ENCODE measurements at regions of chr9 and their contacts with region 1.

Region 1: GRCh38 chr9:75628952-75629351 is 261.5 kb upstream of the PCSK5 start:
- DNase-seq: no peak
- ATAC-seq: no peak
- H3K4me3 ChIP-seq: no peak overlapping the region
- H3K4me3 Mint-ChIP-seq: no peak overlapping the region
- H3K27ac ChIP-seq: no peak overlapping the region
- H3K27ac Mint-ChIP-seq: no peak overlapping the region
- H3K4me1 ChIP-seq: no peaks in the 10 kb centered on the region
- H3K4me1 Mint-ChIP-seq: no peaks in the 10 kb centered on the region
- H3K27me3 ChIP-seq: no peaks in the 10 kb centered on the region
- H3K27me3 Mint-ChIP-seq: peaks cover 16% of the 10 kb centered on the region
- CTCF ChIP-seq: no peak

Region 2: DNA sequence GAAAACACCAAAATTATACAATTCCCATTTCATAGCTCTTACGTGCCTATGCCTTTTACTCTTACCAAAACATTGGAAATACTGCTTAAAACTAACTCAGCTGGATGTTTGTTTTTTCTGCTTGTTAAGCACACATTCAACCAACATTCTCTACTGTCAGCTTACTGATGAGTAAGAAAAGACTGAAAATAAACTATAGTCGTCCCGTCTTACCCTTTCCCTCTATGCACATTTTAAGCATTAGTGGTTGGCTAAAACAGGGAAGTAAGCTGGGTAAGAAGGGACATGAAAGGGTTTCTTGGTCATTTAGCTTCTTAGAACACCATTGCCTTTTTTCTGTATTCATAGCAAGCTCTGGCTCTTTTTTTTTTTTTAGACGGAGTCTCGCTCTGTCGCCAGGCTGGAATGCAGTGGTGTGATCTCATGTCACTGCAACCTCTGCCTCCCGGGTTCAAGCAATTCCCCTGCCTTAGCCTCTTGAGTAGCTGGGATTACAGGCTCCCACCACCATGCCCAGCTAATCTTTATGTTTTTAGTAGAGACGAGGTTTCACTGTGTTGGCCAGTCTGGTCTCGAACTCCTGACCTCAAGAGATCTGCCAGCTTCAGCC is 29.5 kb after region 1 on chr9:
- CTCF ChIA-PET with region 1: no interaction called
- POLR2A ChIA-PET with region 1: no interaction called
- intact Hi-C with region 1: loop called in 1 of 2 experiments (anchors 1 kb)
- DNase-seq: no peak
- ATAC-seq: no peak
- H3K4me3 ChIP-seq: no peak overlapping the region
- H3K4me3 Mint-ChIP-seq: no peak overlapping the region
- H3K27ac ChIP-seq: no peak overlapping the region
- H3K27ac Mint-ChIP-seq: no peak overlapping the region
- H3K4me1 ChIP-seq: no peaks in the 10 kb centered on the region
- H3K4me1 Mint-ChIP-seq: no peaks in the 10 kb centered on the region
- H3K27me3 ChIP-seq: no peaks in the 10 kb centered on the region
- H3K27me3 Mint-ChIP-seq: no peaks in the 10 kb centered on the region
- CTCF ChIP-seq: no peak